Spleen (tissue), 13 donors: ENCODE measurements at regions of chr3 and their contacts with region 1.

Region 1: DNA sequence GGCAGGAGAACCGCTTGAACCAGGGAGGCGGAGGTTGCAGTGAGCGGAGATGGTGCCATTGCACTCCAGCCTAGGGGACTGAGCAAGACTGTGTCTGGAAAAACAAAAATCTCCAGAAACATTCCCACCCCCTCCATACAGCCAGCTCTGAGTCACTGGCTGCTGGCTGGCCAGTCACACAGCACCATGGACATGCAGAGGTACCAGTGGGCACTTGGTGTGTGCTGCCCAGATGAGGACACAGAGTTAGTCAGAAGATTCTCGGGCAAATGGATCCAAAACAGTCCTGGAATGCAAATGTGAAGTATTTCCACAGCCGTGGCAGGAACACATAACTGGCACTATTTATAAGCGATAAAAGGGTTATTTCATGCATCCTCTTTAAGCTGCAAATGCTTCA is 44.6 kb downstream of the BDH1 start:
- DNase-seq: no peak
- H3K4me3 ChIP-seq: no peak overlapping the region
- H3K27ac ChIP-seq: no peak overlapping the region
- H3K4me1 ChIP-seq: peaks cover 0 to 12% (median 9%) of the 10 kb centered on the region in 6 donors
- H3K27me3 ChIP-seq: peaks cover 0 to 10% (median 0%) of the 10 kb centered on the region in 7 donors
- CTCF ChIP-seq: peak in 2 of 11 experiments; percentile 5 to 25
- POLR2A ChIP-seq: no peak

Region 2: GRCh38 chr3:197256836-197257444 is 254.2 kb before region 1 on chr3:
- intact Hi-C with region 1: loop called (anchors 2 kb)
- DNase-seq: no peak
- H3K4me3 ChIP-seq: no peak overlapping the region
- H3K27ac ChIP-seq: no peak overlapping the region
- H3K4me1 ChIP-seq: peaks cover 0 to 67% (median 16%) of the 10 kb centered on the region in 6 donors
- H3K27me3 ChIP-seq: no peaks in the 10 kb centered on the region
- CTCF ChIP-seq: peak in 9 of 11 experiments; percentile 40 to 73 (median 63)
- POLR2A ChIP-seq: no peak

Region 3: DNA sequence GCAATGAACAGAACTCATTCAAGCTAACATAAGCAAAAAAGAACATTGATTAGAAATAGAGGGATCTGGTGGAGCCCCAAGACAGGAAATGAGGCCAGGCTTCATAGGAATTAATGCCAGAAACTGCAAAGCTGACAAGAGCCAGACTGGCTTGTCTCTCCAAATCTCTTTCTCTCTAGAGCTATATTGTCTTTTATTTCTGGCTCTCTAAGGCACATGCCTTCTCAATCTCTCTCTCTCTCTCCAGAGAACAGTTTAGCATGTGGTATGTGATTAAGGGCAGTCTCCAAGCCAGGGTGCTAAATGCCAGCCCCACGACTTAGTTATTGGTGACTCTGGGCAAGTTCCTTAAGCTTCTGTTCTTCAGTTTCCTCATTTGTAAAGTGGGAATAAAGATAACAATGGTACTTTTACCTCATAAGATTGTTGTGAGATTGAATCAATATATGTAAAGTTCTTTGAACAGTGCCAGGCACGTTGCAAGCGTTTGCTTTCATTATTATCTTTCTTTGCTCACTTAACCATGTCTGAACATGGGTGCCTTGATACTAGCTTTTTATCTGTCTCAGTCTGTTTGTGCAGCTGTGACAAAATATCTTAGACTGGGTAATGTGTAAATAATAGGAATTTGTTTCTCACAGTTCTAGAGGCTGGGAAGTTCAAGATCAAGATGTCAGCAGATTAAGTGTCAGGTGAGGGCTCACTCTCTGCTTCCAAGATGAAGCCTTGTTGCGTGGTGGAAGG is 78.6 kb before region 1 on chr3:
- intact Hi-C with region 1: no loop called
- DNase-seq: no peak
- H3K4me3 ChIP-seq: no peak overlapping the region
- H3K27ac ChIP-seq: no peak overlapping the region
- H3K4me1 ChIP-seq: peaks cover 0 to 5% (median 0%) of the 10 kb centered on the region in 6 donors
- H3K27me3 ChIP-seq: peaks cover 0 to 10% (median 0%) of the 10 kb centered on the region in 7 donors
- CTCF ChIP-seq: no peak
- POLR2A ChIP-seq: no peak